T-cell (primary cell): ENCODE measurements at regions of chr10 and their contacts with region 1.

Region 1: GRCh38 chr10:67211680-67212079 is 285.8 kb downstream of the LRRTM3 start:
- DNase-seq: no peak
- ATAC-seq: no peak
- H3K4me3 ChIP-seq: no peak overlapping the region
- H3K4me3 Mint-ChIP-seq: no peak overlapping the region
- H3K27ac ChIP-seq: no peak overlapping the region
- H3K27ac Mint-ChIP-seq: no peak overlapping the region
- H3K4me1 ChIP-seq: no peaks in the 10 kb centered on the region
- H3K4me1 Mint-ChIP-seq: no peaks in the 10 kb centered on the region
- H3K27me3 ChIP-seq: no peaks in the 10 kb centered on the region
- H3K27me3 Mint-ChIP-seq: no peaks in the 10 kb centered on the region

Region 2: GRCh38 chr10:67200913-67201564 is 10.6 kb before region 1 on chr10:
- CTCF ChIA-PET with region 1: no interaction called
- POLR2A ChIA-PET with region 1: interaction called in 1 of 2 experiments, 10 read pairs
- DNase-seq: no peak
- ATAC-seq: no peak
- H3K4me3 ChIP-seq: no peak overlapping the region
- H3K4me3 Mint-ChIP-seq: no peak overlapping the region
- H3K27ac ChIP-seq: no peak overlapping the region
- H3K27ac Mint-ChIP-seq: no peak overlapping the region
- H3K4me1 ChIP-seq: no peaks in the 10 kb centered on the region
- H3K4me1 Mint-ChIP-seq: peaks cover 0 to 8% (median 4%) of the 10 kb centered on the region in 3 donors
- H3K27me3 ChIP-seq: no peaks in the 10 kb centered on the region
- H3K27me3 Mint-ChIP-seq: no peaks in the 10 kb centered on the region

Region 3: DNA sequence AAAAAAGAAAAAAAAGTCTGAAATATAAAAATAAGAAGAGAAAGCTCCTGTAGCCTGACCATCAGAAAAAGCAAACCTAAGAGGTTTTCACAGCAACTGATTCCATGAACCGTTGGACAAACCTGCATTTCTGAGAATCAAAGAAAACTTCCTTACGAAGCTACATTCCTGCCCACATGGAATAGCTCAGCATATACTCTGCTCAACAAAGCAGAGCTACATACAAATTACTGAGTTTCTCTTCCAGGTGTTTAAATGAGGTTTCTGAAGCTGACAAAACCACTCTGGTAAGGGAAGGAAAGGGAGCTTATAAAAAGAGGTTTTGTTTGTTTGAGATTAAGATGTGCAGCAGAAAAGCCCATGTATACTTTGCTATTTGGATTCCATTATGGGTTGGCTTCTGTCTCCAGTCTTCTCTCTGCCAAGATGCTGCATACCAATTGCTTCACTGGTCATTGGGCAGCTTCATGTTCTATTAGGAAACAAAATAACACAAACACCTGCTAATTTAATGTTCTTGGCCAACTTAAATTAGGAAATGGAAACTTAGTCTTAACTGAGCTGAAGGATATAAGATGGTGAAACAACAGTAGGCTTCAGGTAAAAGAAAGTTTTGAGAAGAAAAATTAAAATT is 28.3 kb after region 1 on chr10:
- CTCF ChIA-PET with region 1: no interaction called
- POLR2A ChIA-PET with region 1: no interaction called
- DNase-seq: no peak
- ATAC-seq: no peak
- H3K4me3 ChIP-seq: no peak overlapping the region
- H3K4me3 Mint-ChIP-seq: no peak overlapping the region
- H3K27ac ChIP-seq: no peak overlapping the region
- H3K27ac Mint-ChIP-seq: no peak overlapping the region
- H3K4me1 ChIP-seq: no peaks in the 10 kb centered on the region
- H3K4me1 Mint-ChIP-seq: no peaks in the 10 kb centered on the region
- H3K27me3 ChIP-seq: no peaks in the 10 kb centered on the region
- H3K27me3 Mint-ChIP-seq: no peaks in the 10 kb centered on the region